ENCODE measurements at regions of chr5 and their contacts with region 1.

Region 1: DNA sequence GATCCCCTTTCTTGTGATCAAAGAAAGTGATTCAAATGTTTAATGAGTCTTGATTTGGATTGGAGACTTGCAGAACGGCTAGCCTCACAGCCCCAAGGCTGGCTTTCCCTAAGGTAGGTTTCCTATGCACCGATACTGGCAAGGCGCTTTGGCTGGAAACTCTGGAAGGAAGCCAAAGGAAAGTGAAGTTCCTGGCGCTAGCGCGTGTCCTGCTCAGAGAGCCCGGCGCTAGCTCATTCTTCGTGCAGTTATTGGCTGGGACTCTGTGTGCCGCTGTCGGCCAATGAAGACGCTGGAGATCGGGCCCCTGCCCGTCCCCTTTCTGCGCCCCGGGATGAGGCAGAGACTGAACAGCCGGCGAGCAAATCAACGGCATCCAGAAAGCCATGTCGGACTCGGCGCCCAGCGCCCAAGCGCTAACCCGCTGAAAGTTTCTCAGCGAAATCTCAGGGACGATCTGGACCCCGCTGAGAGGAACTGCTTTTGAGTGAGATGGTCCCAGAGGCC is at the start of gene PCDHGC3:
- DNase-seq: peak; percentile 96
- H3K4me3 ChIP-seq: peak within 1 kb of the TSS; percentile 32 to 70 (median 50)
- H3K27ac ChIP-seq: no peak within 1 kb of the TSS
- H3K4me1 ChIP-seq: peaks cover 7% of the 10 kb centered on the region
- H3K27me3 ChIP-seq: peaks cover 0 to 5% of the 10 kb centered on the region in 2 experiments
- CTCF ChIP-seq: peak in 1 of 2 donors; percentile 8
- POLR2A ChIP-seq: no peak
- total RNA-seq, gene PCDHGC3: 25.4 and 36.1 TPM in 2 replicates

Region 2: GRCh38 chr5:141492168-141492885 is 16.6 kb after region 1 on chr5:
- CTCF ChIA-PET with region 1: interaction called, 10 read pairs
- POLR2A ChIA-PET with region 1: no interaction called
- dilution Hi-C with region 1: no loop called
- intact Hi-C with region 1: no loop called
- DNase-seq: no peak
- H3K4me3 ChIP-seq: no peak overlapping the region
- H3K27ac ChIP-seq: no peak overlapping the region
- H3K4me1 ChIP-seq: no peaks in the 10 kb centered on the region
- H3K27me3 ChIP-seq: peaks cover 10 to 25% of the 10 kb centered on the region in 2 experiments
- CTCF ChIP-seq: no peak
- POLR2A ChIP-seq: no peak

Region 3: GRCh38 chr5:141524604-141525597 is 49.2 kb after region 1 on chr5:
- CTCF ChIA-PET with region 1: interaction called, 66 read pairs
- POLR2A ChIA-PET with region 1: interaction called, 5 read pairs
- dilution Hi-C with region 1: no loop called
- intact Hi-C with region 1: loop called (anchors 1 kb)
- DNase-seq: peak; percentile 96
- H3K4me3 ChIP-seq: no peak overlapping the region
- H3K27ac ChIP-seq: peak overlapping the region; percentile 22
- H3K4me1 ChIP-seq: peaks cover 29% of the 10 kb centered on the region
- H3K27me3 ChIP-seq: no peaks in the 10 kb centered on the region
- CTCF ChIP-seq: peak; percentile 99 to 100
- POLR2A ChIP-seq: no peak

Region 4: DNA sequence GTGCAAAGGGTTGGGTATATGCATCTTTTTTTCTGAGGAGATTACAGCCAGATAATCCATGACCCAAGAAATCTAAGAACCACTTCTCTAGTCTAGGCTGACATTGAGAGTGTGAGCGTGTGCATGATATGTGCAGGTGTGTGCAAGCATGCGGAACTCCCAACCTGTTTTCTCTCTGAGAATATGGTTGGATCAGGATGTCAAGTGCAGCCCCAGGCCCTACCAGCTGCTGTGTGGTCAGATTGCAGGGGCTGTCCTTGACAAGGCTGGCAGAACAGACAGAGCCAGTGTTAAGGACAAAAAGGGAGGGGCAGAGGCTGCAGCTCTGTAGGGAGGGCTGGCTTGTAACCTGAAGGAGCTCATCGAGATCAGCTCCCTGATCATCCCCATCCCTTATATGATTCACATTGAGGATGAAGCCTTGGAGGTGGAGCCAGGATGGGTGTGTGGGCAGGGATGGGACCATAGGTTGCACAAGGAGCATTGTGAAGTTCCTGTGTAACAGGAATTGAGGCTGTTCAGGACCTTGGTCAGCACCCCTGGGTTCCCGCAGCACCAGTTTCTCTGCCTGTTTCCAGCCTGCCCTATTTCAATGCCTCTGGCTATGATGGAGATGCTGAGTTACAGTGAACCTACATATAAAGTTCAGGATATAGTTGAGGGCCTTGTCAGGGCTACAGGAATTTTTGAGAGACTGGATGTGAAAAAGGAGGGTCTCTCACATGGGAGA is 259.0 kb after region 1 on chr5:
- CTCF ChIA-PET with region 1: no interaction called
- POLR2A ChIA-PET with region 1: no interaction called
- dilution Hi-C with region 1: no loop called
- intact Hi-C with region 1: no loop called
- DNase-seq: peak; percentile 47
- H3K4me3 ChIP-seq: no peak overlapping the region
- H3K27ac ChIP-seq: no peak overlapping the region
- H3K4me1 ChIP-seq: no peaks in the 10 kb centered on the region
- H3K27me3 ChIP-seq: peaks cover 11% of the 10 kb centered on the region in 2 experiments
- CTCF ChIP-seq: no peak
- POLR2A ChIP-seq: no peak

Region 5: GRCh38 chr5:141914199-141914743 is 438.6 kb after region 1 on chr5:
- CTCF ChIA-PET with region 1: no interaction called
- POLR2A ChIA-PET with region 1: no interaction called
- dilution Hi-C with region 1: no loop called
- intact Hi-C with region 1: no loop called
- DNase-seq: peak; percentile 9
- H3K4me3 ChIP-seq: peak overlapping the region in 1 of 3 experiments; percentile 20
- H3K27ac ChIP-seq: no peak overlapping the region
- H3K4me1 ChIP-seq: peaks cover 3% of the 10 kb centered on the region
- H3K27me3 ChIP-seq: peaks cover 9 to 14% of the 10 kb centered on the region in 2 experiments
- CTCF ChIP-seq: peak in 1 of 2 donors; percentile 43
- POLR2A ChIP-seq: no peak